CD4-positive, alpha-beta memory T cell (primary cell): ENCODE measurements at regions of chr22 and their contacts with region 1.

Region 1: GRCh38 chr22:37953437-37954179 is at the starts of genes C22orf23 and POLR2F:
- DNase-seq: peak; percentile 94 to 96 (median 95)
- H3K4me3 ChIP-seq: peak within 1 kb of the TSS; percentile 72 to 91
- H3K4me3 Mint-ChIP-seq: peak within 1 kb of the TSS; percentile 96 to 100 (median 100)
- H3K27ac ChIP-seq: peak within 1 kb of the TSS; percentile 72
- H3K27ac Mint-ChIP-seq: peak within 1 kb of the TSS; percentile 76 to 100 (median 99)
- H3K4me1 ChIP-seq: peaks cover 20% of the 10 kb centered on the region
- H3K4me1 Mint-ChIP-seq: peaks cover 33 to 52% (median 40%) of the 10 kb centered on the region in 4 donors
- H3K27me3 ChIP-seq: peaks cover 3% of the 10 kb centered on the region
- H3K27me3 Mint-ChIP-seq: peaks cover 9 to 13% of the 10 kb centered on the region in 2 donors
- total RNA-seq, gene C22orf23: not detected
- total RNA-seq, gene POLR2F: 44.9 to 47.5 TPM

Region 2: GRCh38 chr22:37849089-37849751 is 104.4 kb before region 1 on chr22 and contains the start of gene EIF3L:
- CTCF ChIA-PET with region 1: no interaction called
- POLR2A ChIA-PET with region 1: interaction called, 6 read pairs
- intact Hi-C with region 1: loop called (anchors 1 kb)
- DNase-seq: peak; percentile 81 to 88 (median 85)
- H3K4me3 ChIP-seq: peak within 1 kb of the TSS; percentile 61 to 94
- H3K4me3 Mint-ChIP-seq: peak within 1 kb of the TSS; percentile 83 to 98 (median 93)
- H3K27ac ChIP-seq: peak within 1 kb of the TSS; percentile 87
- H3K27ac Mint-ChIP-seq: peak within 1 kb of the TSS; percentile 91 to 99 (median 97)
- H3K4me1 ChIP-seq: peaks cover 29% of the 10 kb centered on the region
- H3K4me1 Mint-ChIP-seq: peaks cover 28 to 58% (median 43%) of the 10 kb centered on the region in 4 donors
- H3K27me3 ChIP-seq: no peaks in the 10 kb centered on the region
- H3K27me3 Mint-ChIP-seq: no peaks in the 10 kb centered on the region
- total RNA-seq, gene EIF3L: 550 to 571 TPM

Region 3: GRCh38 chr22:37965940-37966664 is 12.5 kb after region 1 on chr22:
- CTCF ChIA-PET with region 1: interaction called, 26 read pairs
- POLR2A ChIA-PET with region 1: interaction called, 3 read pairs
- intact Hi-C with region 1: no loop called
- DNase-seq: no peak
- H3K4me3 ChIP-seq: no peak overlapping the region
- H3K4me3 Mint-ChIP-seq: no peak overlapping the region
- H3K27ac ChIP-seq: no peak overlapping the region
- H3K27ac Mint-ChIP-seq: no peak overlapping the region
- H3K4me1 ChIP-seq: no peaks in the 10 kb centered on the region
- H3K4me1 Mint-ChIP-seq: peaks cover 5 to 10% (median 6%) of the 10 kb centered on the region in 4 donors
- H3K27me3 ChIP-seq: no peaks in the 10 kb centered on the region
- H3K27me3 Mint-ChIP-seq: no peaks in the 10 kb centered on the region

Region 4: DNA sequence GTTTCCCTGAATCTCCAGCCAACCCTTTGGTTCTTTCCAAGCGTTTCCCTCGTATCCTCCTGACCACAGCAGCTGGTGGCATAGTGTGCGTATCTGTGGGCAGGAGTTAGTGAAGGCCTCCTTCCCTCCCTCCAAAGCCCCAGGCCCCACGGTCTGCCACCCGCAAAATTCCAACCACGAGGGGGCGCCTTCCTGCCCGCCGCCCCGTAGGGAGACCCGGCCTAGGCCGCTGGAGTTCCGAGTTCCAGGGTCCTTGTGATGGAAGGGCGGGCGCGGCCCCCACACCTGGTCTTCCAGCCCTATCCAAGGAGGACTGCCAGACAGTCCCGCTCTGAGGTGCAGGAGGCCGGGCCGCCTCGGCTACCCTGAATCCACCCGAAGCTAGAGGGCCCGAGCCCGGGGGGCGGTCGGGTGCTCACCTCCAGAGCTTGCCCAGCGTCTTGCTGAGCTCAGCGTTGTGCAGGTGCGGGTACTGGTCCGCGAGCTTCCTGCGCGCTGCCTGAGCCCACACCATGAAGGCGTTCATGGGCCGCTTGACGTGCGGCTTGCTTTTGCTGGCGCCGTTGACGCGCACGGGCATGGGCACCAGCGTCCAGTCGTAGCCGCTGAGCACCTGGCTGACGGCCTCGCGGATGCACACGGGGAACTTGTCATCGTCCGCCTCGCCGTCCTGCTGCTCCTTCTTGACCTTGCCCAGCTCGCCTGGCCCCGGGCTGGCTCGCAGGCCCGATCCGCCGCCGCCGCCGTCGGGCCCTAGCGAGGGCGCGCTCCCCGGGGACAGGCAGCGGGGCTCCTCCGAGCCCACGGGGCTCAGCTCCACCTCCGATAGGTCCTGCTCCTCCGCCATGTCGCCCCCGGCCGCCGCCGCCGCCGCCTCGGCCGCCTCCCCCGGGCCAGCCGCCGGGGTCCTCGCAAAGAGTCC is 29.6 kb after region 1 on chr22:
- CTCF ChIA-PET with region 1: no interaction called
- POLR2A ChIA-PET with region 1: no interaction called
- intact Hi-C with region 1: no loop called
- DNase-seq: no peak
- H3K4me3 ChIP-seq: no peak overlapping the region
- H3K4me3 Mint-ChIP-seq: no peak overlapping the region
- H3K27ac ChIP-seq: no peak overlapping the region
- H3K27ac Mint-ChIP-seq: no peak overlapping the region
- H3K4me1 ChIP-seq: no peaks in the 10 kb centered on the region
- H3K4me1 Mint-ChIP-seq: no peaks in the 10 kb centered on the region
- H3K27me3 ChIP-seq: no peaks in the 10 kb centered on the region
- H3K27me3 Mint-ChIP-seq: no peaks in the 10 kb centered on the region